ENCODE measurements at regions of chr14 and their contacts with region 1.

Region 1: DNA sequence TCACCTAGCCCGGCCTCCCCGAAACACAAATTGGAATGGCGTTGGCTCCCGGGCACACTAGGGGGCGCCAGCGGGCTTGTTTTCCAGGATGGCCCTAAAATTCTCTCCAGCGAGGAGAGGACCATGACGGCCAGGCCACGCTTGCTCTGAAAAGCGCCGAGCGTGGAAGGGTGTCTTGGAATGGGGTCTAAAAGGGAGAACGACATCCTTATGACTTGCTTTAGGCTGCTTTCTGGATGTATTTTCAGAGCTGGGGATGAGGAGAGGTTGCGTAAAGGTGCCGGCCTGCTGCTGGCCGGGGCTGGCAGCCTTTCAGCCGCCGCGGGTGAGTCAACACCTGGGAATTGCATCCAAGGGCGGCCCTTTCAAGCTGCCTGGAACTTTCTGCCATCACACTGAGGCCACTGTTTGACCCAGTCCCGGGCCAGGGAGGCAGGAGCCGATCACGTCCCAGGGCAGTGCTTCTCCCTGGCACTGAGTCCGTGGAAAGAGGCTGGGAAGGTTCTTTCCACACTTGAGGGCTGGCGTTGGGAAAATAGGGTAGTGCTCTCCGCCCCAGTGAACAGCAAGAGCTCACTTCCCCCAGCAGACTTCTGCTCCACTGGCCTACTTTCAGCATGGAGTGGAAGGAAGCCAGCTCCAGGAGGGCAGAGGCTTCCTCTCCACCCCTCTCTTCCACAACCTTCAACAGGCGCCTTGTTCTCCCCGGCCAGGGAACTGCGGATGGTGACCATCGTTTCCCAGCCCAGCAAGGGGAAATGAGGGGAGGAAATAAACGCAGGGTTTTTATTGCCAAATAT is 216.2 kb downstream of the TTC8 start:
- DNase-seq: peak; percentile 82 to 93
- H3K4me3 ChIP-seq: peak overlapping the region; percentile 44
- H3K4me3 Mint-ChIP-seq: peak overlapping the region; percentile 77
- H3K27ac Mint-ChIP-seq: peak overlapping the region; percentile 89
- H3K4me1 ChIP-seq: 0 out of 2 replicates have a peak, but pooled peaks cover 4% of the 10 kb centered on the region
- H3K4me1 Mint-ChIP-seq: peaks cover 7% of the 10 kb centered on the region
- H3K27me3 ChIP-seq: no peaks in the 10 kb centered on the region
- H3K27me3 Mint-ChIP-seq: no peaks in the 10 kb centered on the region
- CTCF ChIP-seq: peak; percentile 90 to 92

Region 2: GRCh38 chr14:89060191-89060590 is 19.5 kb after region 1 on chr14:
- CTCF ChIA-PET with region 1: no interaction called
- POLR2A ChIA-PET with region 1: no interaction called
- intact Hi-C with region 1: loop called (anchors 1 kb)
- DNase-seq: no peak
- H3K4me3 ChIP-seq: no peak overlapping the region
- H3K4me3 Mint-ChIP-seq: no peak overlapping the region
- H3K27ac Mint-ChIP-seq: no peak overlapping the region
- H3K4me1 ChIP-seq: peaks cover 23% of the 10 kb centered on the region
- H3K4me1 Mint-ChIP-seq: peaks cover 13% of the 10 kb centered on the region
- H3K27me3 ChIP-seq: no peaks in the 10 kb centered on the region
- H3K27me3 Mint-ChIP-seq: no peaks in the 10 kb centered on the region
- CTCF ChIP-seq: no peak

Region 3: GRCh38 chr14:89178802-89179535 is 138.3 kb after region 1 on chr14:
- CTCF ChIA-PET with region 1: no interaction called
- POLR2A ChIA-PET with region 1: no interaction called
- intact Hi-C with region 1: loop called (anchors 5 kb)
- DNase-seq: no peak
- H3K4me3 ChIP-seq: no peak overlapping the region
- H3K4me3 Mint-ChIP-seq: no peak overlapping the region
- H3K27ac Mint-ChIP-seq: no peak overlapping the region
- H3K4me1 ChIP-seq: peaks cover 5% of the 10 kb centered on the region
- H3K4me1 Mint-ChIP-seq: no peaks in the 10 kb centered on the region
- H3K27me3 ChIP-seq: no peaks in the 10 kb centered on the region
- H3K27me3 Mint-ChIP-seq: no peaks in the 10 kb centered on the region
- CTCF ChIP-seq: no peak

Region 4: DNA sequence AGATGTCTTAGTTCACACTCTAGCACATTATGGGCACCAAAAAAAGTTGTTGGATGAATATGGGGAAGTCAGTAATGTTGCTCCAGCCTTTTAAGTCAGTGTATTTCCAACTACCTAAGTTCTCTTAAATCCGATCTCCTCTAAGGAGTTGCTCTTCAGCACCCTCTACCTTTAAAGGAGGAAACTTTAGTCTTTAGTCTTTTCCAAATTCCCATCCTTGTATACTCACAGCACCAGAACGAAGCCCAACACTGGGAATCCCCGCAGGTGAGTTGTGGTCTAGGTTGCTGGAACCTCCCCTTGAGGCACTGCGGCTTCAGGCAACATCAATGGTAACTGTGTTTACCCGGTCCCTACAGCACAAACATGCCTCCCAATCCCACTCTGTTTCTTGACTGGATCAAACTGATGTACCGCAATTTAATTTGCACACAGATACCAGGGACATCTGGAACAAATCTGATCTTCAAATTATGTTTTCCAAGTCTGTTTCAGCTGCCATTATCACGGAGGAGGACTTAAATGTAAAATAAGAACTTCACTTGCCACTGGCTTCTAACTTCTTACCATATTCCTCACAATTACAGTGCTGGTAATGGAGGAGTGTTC is 197.4 kb after region 1 on chr14:
- CTCF ChIA-PET with region 1: interaction called, 9 read pairs
- POLR2A ChIA-PET with region 1: no interaction called
- intact Hi-C with region 1: loop called (anchors 1 kb)
- DNase-seq: no peak
- H3K4me3 ChIP-seq: no peak overlapping the region
- H3K4me3 Mint-ChIP-seq: no peak overlapping the region
- H3K27ac Mint-ChIP-seq: no peak overlapping the region
- H3K4me1 ChIP-seq: no peaks in the 10 kb centered on the region
- H3K4me1 Mint-ChIP-seq: no peaks in the 10 kb centered on the region
- H3K27me3 ChIP-seq: no peaks in the 10 kb centered on the region
- H3K27me3 Mint-ChIP-seq: no peaks in the 10 kb centered on the region
- CTCF ChIP-seq: peak in 1 of 2 experiments; percentile 34

Region 5: GRCh38 chr14:89330236-89331002 is 289.8 kb after region 1 on chr14:
- CTCF ChIA-PET with region 1: no interaction called
- POLR2A ChIA-PET with region 1: no interaction called
- intact Hi-C with region 1: loop called (anchors 10 kb)
- DNase-seq: no peak
- H3K4me3 ChIP-seq: no peak overlapping the region
- H3K4me3 Mint-ChIP-seq: no peak overlapping the region
- H3K27ac Mint-ChIP-seq: no peak overlapping the region
- H3K4me1 ChIP-seq: no peaks in the 10 kb centered on the region
- H3K4me1 Mint-ChIP-seq: no peaks in the 10 kb centered on the region
- H3K27me3 ChIP-seq: no peaks in the 10 kb centered on the region
- H3K27me3 Mint-ChIP-seq: no peaks in the 10 kb centered on the region
- CTCF ChIP-seq: no peak

Region 6: DNA sequence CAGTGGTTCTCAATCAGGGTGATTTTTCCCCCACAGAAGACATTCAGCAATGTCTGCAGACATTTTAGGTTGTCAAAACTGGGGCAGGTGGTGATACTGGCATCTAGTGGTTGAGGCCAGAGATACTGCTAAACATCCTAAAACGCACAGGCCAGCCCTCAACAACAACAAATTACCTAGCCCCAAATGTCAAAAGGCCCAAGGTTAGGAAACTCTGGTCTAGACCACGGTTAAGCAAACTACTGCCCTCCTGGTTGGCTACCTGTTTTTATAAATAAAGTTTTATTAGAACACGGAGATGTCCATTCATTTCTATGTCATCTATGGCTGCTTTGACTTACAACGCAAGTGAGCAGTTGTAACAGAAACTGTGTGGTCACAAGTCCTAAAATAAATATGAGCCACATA is 727.2 kb after region 1 on chr14:
- CTCF ChIA-PET with region 1: no interaction called
- POLR2A ChIA-PET with region 1: no interaction called
- intact Hi-C with region 1: loop called (anchors 1 kb)
- DNase-seq: peak in 1 of 2 experiments; percentile 62
- H3K4me3 ChIP-seq: no peak overlapping the region
- H3K4me3 Mint-ChIP-seq: no peak overlapping the region
- H3K27ac Mint-ChIP-seq: no peak overlapping the region
- H3K4me1 ChIP-seq: no peaks in the 10 kb centered on the region
- H3K4me1 Mint-ChIP-seq: no peaks in the 10 kb centered on the region
- H3K27me3 ChIP-seq: no peaks in the 10 kb centered on the region
- H3K27me3 Mint-ChIP-seq: peaks cover 3% of the 10 kb centered on the region
- CTCF ChIP-seq: peak; percentile 49 to 70

Region 7: GRCh38 chr14:89915114-89915878 is 874.6 kb after region 1 on chr14:
- CTCF ChIA-PET with region 1: no interaction called
- POLR2A ChIA-PET with region 1: no interaction called
- intact Hi-C with region 1: loop called (anchors 1 kb)
- DNase-seq: peak; percentile 38 to 58
- H3K4me3 ChIP-seq: no peak overlapping the region
- H3K4me3 Mint-ChIP-seq: no peak overlapping the region
- H3K27ac Mint-ChIP-seq: no peak overlapping the region
- H3K4me1 ChIP-seq: no peaks in the 10 kb centered on the region; the same call in 1 of the 2 replicates
- H3K4me1 Mint-ChIP-seq: peaks cover 14% of the 10 kb centered on the region
- H3K27me3 ChIP-seq: no peaks in the 10 kb centered on the region
- H3K27me3 Mint-ChIP-seq: no peaks in the 10 kb centered on the region
- CTCF ChIP-seq: peak; percentile 77 to 87